OCI-LY7 (cell line): ENCODE measurements at regions of chr9 and their contacts with region 1.

Region 1: GRCh38 chr9:35675732-35676392 is 2.1 kb downstream of the CA9 start:
- DNase-seq: no peak
- H3K4me3 ChIP-seq: no peak overlapping the region
- H3K27ac ChIP-seq: no peak overlapping the region
- H3K4me1 ChIP-seq: peaks cover 20% of the 10 kb centered on the region
- CTCF ChIP-seq: no peak

Region 2: DNA sequence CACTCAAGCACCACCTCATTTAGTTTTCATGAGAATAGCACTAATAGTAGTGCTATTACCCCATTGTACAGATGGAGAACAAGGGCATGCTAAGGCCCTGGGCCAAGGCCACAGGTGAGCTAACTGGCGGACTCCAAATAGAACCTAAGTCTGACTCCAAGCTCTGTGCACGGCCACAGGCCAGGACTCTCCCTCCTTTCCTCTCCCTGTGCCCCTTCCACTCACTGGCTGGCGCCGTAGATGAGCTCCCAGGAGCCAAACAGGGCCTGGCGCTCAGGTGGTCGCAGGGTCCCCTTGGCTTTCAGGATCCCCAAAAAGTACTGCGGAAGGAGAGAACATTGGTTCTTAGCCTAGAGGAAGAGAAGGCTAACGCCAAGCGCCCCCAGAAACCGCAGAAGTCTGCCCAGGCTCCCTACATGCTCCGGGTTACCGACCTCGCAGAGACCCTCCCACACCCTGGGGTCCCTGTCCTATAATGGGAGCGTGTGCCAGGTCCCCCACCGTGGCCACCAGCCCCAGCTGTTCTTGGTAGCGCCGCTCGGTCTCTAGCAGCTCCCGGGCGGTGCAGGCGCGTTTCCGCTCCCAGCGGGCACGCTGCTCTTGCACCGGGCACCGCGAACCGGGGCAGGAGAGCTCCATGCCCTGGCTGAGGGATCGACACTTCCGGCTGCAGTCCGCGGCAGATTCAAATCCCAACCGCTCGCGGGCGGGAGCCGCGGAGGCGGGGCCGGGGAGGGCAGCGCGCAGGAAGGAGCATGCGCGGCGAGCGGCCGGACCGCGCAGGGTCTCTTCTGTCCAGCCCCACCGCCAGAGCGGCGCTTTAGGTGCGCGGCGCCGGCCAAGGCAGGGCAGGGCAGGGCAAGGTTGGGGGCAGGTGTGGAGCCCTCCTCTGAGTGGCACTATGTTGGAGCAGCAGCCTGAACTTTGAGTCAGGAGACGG is 11.1 kb before region 1 on chr9 and contains the start of gene ARHGEF39:
- CTCF ChIA-PET with region 1: interaction called, 4 read pairs
- POLR2A ChIA-PET with region 1: interaction called, 13 read pairs
- intact Hi-C with region 1: no loop called
- DNase-seq: peak; percentile 88
- H3K4me3 ChIP-seq: peak within 1 kb of the TSS; percentile 78
- H3K27ac ChIP-seq: peak within 1 kb of the TSS; percentile 85
- H3K4me1 ChIP-seq: peaks cover 62% of the 10 kb centered on the region
- CTCF ChIP-seq: peak; percentile 67
- total RNA-seq, gene ARHGEF39: 22.7 and 30.8 TPM in 2 replicates

Region 3: DNA sequence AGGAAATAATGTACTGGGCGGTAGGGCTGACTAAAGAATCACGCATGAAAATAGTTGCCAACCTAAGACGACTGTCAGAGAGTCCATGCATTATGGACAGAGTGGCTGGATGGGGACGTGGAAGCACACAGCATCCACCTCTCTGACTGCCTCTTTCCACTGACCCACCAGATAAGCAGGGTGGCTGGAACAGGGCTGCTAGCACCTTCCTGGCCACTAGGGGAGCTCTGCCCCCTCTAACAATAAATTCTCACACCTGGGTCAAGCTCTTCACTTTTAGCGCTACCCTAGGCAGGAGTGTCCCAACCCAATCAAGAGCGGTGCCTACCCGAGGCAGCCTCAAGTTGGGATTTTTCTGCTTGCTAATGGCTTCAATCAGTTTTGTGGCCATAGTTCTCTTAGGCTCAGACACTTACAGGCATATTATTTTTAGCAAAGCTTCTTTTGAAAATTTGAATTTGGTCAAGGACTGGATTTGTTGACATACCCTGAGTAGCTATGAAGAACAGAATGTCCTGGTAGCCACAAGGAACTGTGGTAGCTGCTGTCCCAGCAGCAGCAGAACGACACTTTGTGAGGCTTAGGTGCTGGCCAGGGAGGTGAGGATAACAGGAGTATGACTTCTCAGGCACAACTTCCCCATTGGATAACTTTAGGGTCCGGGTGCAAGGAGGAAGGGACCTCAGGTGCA is 20.8 kb after region 1 on chr9:
- CTCF ChIA-PET with region 1: interaction called, 3 read pairs
- POLR2A ChIA-PET with region 1: interaction called, 12 read pairs
- intact Hi-C with region 1: no loop called
- DNase-seq: peak; percentile 77
- H3K4me3 ChIP-seq: no peak overlapping the region
- H3K27ac ChIP-seq: no peak overlapping the region
- H3K4me1 ChIP-seq: no peaks in the 10 kb centered on the region
- CTCF ChIP-seq: peak; percentile 97

Region 4: DNA sequence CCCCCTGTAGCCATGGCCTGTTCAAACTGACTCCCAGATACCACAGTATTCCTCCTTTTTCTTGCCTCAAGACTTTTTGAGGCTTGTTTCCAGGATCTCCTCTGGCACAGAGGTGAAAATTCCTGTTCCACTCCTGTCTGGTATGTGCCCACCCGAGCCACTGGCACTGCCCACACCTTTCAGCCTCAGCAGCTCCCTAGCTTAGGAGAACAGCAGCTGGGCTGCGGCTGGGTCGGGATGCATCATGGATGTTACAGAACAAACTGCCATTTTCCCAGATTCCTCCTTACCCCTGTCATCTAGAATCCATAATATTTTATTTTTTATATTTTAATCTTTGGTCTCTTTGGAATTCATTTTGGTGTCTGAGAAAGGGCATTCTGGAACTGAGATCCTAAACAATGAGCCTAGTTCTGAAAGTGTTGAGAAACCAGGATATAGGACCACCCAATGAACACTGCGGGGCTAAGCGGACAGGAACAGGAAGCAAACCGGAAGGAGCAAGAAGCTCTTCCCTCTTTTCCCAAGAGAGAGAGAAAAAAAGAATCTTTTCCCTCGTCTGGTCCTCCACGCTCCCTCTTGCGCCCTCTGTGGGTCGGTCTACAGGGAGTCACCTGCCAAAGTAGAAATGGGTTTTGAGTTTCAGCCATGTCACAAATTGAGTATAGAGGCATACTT is 269.6 kb after region 1 on chr9:
- CTCF ChIA-PET with region 1: no interaction called
- POLR2A ChIA-PET with region 1: no interaction called
- intact Hi-C with region 1: no loop called
- DNase-seq: peak; percentile 63
- H3K4me3 ChIP-seq: no peak overlapping the region
- H3K27ac ChIP-seq: no peak overlapping the region
- H3K4me1 ChIP-seq: peaks cover 9% of the 10 kb centered on the region
- CTCF ChIP-seq: peak; percentile 97